ENCODE measurements at regions of chr7 and their contacts with region 1.

Region 1: GRCh38 chr7:4797858-4798705 is 22.7 kb downstream of the AP5Z1 start:
- DNase-seq: peak; percentile 32 to 79 (median 60)
- H3K4me3 ChIP-seq: no peak overlapping the region
- H3K27ac ChIP-seq: no peak overlapping the region
- H3K4me1 ChIP-seq: no peaks in the 10 kb centered on the region
- H3K27me3 ChIP-seq: no peaks in the 10 kb centered on the region
- CTCF ChIP-seq: peak; percentile 76 to 88 (median 83)
- EP300 ChIP-seq: no peak
- POLR2A ChIP-seq: no peak

Region 2: DNA sequence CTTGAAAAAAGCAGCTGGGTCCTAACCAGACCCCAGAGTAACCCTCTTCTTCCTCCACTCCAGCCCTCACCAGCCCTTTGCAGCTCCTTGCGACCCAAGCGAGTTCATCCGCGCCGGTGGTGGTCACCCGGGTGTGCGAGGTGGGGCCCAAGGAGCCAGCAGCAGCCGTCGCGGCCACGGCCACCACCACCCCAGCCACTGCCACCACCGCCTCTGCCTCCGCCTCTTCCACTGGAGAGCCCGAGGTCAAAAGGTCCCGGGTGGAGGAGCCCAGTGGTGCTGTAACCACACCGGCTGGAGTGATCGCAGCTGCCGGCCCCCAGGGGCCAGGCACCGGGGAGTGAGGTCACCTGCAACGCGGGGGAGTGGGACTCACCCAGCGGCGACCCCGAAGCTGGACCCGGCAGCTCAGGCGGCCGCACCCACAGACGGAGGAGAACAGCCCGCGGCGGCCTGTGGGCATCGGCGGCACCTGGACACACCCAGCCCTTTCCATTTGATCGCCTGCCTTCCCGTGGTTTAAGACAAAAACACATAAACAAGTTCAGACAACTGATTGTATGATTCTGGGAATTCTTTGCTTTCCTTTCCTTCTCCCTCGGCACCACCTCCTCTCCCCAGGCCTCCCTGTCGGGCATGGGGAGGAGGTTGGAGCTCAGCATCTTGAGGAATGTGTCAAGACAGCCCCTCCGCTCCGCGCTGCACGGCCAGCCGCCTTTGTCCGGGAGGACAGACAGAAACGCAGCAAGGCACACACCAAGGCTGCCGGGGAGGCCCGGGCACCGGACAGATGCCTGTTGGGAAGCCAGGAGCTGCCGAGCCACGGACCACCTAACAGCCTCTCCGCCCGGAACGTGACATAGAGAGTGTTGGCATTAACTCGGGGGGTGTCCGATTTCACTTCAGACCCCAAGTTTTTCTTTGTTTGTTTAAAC is 35.7 kb before region 1 on chr7:
- intact Hi-C with region 1: no loop called
- DNase-seq: no peak
- H3K4me3 ChIP-seq: no peak overlapping the region
- H3K27ac ChIP-seq: no peak overlapping the region
- H3K4me1 ChIP-seq: no peaks in the 10 kb centered on the region
- H3K27me3 ChIP-seq: no peaks in the 10 kb centered on the region
- CTCF ChIP-seq: no peak
- EP300 ChIP-seq: no peak
- POLR2A ChIP-seq: no peak

Region 3: DNA sequence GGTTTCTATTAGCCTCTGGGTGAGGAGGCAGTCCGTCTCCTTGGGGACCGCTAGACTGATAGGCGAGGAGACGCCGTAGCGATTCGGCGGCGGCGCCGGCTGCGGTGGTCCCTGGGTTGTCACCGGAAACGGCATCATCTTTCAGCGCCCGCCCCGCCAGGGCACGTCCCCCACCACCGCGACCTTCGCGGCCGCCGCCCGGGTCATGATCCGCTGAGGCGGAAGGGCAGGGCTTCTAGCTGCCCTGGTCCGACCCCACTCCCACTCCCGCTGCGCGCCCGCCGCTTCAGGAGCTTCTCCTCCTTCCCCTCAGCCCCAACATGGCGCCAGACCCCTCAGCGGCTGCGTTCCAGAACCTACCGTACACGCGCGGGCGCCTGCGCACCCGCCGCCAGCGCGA is 63.6 kb after region 1 on chr7 and contains the start of gene PAPOLB:
- intact Hi-C with region 1: no loop called
- DNase-seq: no peak
- H3K4me3 ChIP-seq: peak within 1 kb of the TSS; percentile 6
- H3K27ac ChIP-seq: no peak within 1 kb of the TSS
- H3K4me1 ChIP-seq: no peaks in the 10 kb centered on the region
- H3K27me3 ChIP-seq: no peaks in the 10 kb centered on the region
- CTCF ChIP-seq: no peak
- EP300 ChIP-seq: no peak
- POLR2A ChIP-seq: no peak
- total RNA-seq, gene PAPOLB: under 0.01 to 0.36 (median 0.09) TPM in 6 of 7 donors, not detected in the other

Region 4: DNA sequence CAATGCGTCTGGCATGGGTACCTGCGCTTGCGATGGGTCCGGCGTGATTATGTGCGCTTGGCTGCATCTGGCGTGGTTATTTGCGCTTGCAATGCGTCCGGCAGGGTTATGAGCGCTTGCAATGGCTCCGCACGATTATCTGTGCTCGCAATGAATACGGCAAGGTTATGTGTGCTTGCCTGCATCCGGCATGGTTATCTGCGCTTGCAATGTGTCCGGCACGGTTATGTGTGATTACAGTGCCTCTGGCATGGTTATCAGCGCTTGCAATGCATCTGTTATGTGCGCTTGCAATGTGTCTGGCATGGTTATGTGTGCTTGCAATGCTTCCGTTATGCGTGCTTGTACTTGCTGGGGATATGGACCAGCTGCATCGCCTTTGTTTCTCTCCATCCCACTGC is 285.2 kb after region 1 on chr7:
- intact Hi-C with region 1: loop called in 3 of 4 experiments (anchors 2 to 10 kb)
- DNase-seq: no peak
- H3K4me3 ChIP-seq: no peak overlapping the region
- H3K27ac ChIP-seq: no peak overlapping the region
- H3K4me1 ChIP-seq: no peaks in the 10 kb centered on the region
- H3K27me3 ChIP-seq: no peaks in the 10 kb centered on the region
- CTCF ChIP-seq: no peak
- EP300 ChIP-seq: no peak
- POLR2A ChIP-seq: no peak

Region 5: DNA sequence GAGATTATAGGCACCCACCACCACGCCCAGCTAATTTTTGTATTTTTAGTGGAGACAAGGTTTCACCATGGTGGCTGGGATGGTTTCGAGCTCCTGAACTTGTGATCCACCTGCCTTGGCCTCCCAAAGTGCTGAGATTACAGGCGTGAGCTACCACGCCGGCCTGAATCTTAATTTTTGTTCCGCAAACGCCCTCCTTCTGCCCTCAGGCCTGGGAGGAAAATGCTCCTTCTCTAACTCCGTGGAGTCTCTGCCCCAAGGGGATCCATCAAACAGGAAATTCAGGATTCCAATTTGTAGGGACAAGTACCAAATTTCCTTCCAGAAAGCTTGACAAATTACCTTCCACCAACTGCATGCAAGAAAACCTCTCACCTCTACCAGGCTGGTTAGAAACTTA is 290.8 kb after region 1 on chr7:
- intact Hi-C with region 1: loop called in 3 of 4 experiments (anchors 2 to 10 kb)
- DNase-seq: no peak
- H3K4me3 ChIP-seq: no peak overlapping the region
- H3K27ac ChIP-seq: no peak overlapping the region
- H3K4me1 ChIP-seq: no peaks in the 10 kb centered on the region
- H3K27me3 ChIP-seq: no peaks in the 10 kb centered on the region
- CTCF ChIP-seq: no peak
- EP300 ChIP-seq: no peak
- POLR2A ChIP-seq: no peak